ENCODE measurements at regions of chr19 and their contacts with region 1.

Region 1: DNA sequence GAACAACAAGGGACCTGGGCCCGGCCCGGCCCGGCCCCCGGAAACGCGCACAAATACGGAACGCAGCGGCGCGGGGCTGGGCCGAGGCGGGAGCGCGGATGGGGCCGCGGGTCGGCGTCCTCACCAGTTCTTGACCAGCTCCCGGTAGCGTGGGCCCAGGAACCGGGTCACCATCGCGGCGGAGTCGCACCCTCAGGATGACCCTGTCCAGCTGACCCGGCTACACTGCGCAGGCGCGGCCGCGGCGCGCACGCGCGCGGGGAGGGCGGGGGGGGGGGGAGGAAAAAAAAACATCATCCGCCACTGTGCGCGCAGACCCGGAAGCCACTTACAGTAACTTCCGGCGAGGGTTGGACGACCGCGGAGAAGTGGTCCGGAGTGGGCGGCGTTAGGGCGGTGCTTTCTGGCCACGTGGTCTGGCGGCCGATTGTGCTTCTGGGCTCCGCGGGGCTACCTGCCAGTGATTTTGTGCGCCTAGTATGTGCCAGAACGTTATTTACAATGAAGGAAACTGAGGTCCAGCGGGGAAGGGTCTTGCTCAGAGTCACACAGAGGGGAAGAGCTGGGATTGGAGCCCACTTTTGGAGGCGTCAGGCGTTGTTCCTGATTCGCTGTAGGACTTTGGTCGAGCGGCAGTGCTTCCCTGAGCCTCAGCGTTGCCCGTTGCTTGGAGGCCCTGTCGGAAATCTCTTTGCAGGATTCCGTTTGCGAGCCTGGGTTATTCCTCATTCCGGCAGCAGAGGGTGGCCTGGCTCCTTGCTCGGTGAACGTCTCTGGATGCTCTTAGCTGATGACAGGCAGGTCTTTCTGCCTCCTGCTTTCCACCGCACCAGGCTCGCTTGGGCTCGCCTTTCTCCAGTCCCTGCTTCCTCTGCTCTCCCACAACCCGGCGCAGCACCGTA is at the start of gene UQCR11:
- DNase-seq: peak; percentile 95
- H3K4me3 ChIP-seq: peak within 1 kb of the TSS; percentile 87 to 99 (median 95)
- H3K27ac ChIP-seq: peak within 1 kb of the TSS; percentile 51
- H3K4me1 ChIP-seq: peaks cover 9% of the 10 kb centered on the region
- H3K27me3 ChIP-seq: no peaks in the 10 kb centered on the region
- CTCF ChIP-seq: peak; percentile 32 to 60
- POLR2A ChIP-seq: peak; percentile 93
- total RNA-seq, gene UQCR11: 210 and 223 TPM in 2 replicates

Region 2: DNA sequence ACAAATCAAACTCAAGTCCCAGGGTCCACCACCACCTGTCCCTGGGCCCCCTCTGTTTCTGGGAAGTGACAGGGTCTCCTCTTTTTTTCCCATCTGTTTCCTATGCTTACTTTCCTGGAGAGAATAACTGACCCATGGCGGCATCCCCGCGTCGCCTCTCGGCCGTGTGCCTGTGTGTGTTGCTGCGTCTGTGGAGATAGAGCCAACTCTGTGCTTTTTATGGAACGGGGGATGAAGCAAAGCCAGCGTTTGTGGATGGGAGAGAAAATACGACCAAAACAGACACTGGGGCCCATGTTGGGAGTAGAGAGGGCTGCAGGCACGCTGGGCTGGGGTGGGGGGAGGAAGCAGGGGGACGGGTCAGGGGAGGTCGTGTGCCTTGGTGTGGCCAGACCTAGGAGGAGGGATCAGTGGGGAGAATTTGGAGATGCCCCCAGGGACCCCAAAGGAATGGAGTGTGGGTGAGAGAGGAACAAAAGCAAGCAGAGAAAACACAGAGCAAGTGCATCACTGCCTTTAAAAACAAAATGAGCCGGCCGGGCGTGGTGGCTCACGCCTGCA is 65.0 kb before region 1 on chr19:
- CTCF ChIA-PET with region 1: interaction called, 13 read pairs
- POLR2A ChIA-PET with region 1: no interaction called
- dilution Hi-C with region 1: no loop called
- intact Hi-C with region 1: no loop called
- DNase-seq: no peak
- H3K4me3 ChIP-seq: no peak overlapping the region
- H3K27ac ChIP-seq: no peak overlapping the region
- H3K4me1 ChIP-seq: no peaks in the 10 kb centered on the region
- H3K27me3 ChIP-seq: no peaks in the 10 kb centered on the region
- CTCF ChIP-seq: no peak
- POLR2A ChIP-seq: no peak

Region 3: DNA sequence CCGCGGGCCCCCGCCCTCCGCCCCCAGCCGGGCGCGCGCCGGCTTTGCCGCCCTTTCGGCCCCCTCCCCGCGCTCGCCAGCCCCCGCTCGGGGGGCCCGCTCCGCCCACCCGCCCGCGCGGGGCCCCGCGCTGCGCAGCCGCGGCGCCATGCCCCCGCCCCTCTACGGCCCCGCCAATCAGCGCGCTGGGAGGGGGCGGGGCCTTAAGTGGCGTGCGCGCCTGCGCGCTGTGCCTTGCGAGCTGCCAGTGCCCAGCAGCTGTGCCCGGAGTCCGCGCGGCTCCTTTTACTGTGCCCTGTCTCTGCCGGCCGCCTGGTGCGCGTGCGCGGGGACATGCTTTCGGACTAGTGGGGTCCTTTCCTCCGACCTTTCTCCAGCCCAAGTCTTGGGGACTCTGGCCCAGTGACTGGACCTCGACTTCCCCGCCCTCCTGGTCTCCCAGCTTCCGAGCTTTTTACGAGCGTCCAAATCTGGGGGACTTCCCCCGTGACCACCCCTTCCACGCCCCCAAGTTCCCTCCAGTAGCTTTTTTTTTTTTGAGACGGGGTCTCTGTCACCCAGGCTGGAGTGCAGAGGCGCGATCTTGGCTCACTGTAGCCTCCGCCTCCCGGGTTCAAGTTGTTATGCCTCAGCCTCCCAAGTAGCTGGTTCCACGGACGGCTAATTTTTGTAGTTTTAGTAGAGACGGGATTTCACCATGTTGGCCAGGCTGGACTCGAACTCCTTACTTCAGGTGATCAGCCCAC is 12.6 kb before region 1 on chr19 and contains the start of gene MBD3:
- CTCF ChIA-PET with region 1: interaction called, 4 read pairs
- POLR2A ChIA-PET with region 1: interaction called, 3 read pairs
- dilution Hi-C with region 1: no loop called
- intact Hi-C with region 1: loop called (anchors 1 kb)
- DNase-seq: peak; percentile 89
- H3K4me3 ChIP-seq: peak within 1 kb of the TSS; percentile 89 to 99 (median 99)
- H3K27ac ChIP-seq: peak within 1 kb of the TSS; percentile 88
- H3K4me1 ChIP-seq: peaks cover 15% of the 10 kb centered on the region
- H3K27me3 ChIP-seq: no peaks in the 10 kb centered on the region
- CTCF ChIP-seq: no peak
- POLR2A ChIP-seq: peak; percentile 75
- total RNA-seq, gene MBD3: 120 and 121 TPM in 2 replicates

Region 4: GRCh38 chr19:1652471-1653299 is 47.2 kb after region 1 on chr19 and contains the start of gene TCF3:
- CTCF ChIA-PET with region 1: interaction called, 6 read pairs
- POLR2A ChIA-PET with region 1: no interaction called
- dilution Hi-C with region 1: no loop called
- intact Hi-C with region 1: loop called (anchors 1 kb)
- DNase-seq: peak; percentile 99
- H3K4me3 ChIP-seq: peak within 1 kb of the TSS; percentile 45 to 89 (median 62)
- H3K27ac ChIP-seq: peak within 1 kb of the TSS; percentile 98
- H3K4me1 ChIP-seq: peaks cover 2% of the 10 kb centered on the region
- H3K27me3 ChIP-seq: no peaks in the 10 kb centered on the region
- CTCF ChIP-seq: no peak
- POLR2A ChIP-seq: peak; percentile 28
- total RNA-seq, gene TCF3: 193 and 197 TPM in 2 replicates

Region 5: DNA sequence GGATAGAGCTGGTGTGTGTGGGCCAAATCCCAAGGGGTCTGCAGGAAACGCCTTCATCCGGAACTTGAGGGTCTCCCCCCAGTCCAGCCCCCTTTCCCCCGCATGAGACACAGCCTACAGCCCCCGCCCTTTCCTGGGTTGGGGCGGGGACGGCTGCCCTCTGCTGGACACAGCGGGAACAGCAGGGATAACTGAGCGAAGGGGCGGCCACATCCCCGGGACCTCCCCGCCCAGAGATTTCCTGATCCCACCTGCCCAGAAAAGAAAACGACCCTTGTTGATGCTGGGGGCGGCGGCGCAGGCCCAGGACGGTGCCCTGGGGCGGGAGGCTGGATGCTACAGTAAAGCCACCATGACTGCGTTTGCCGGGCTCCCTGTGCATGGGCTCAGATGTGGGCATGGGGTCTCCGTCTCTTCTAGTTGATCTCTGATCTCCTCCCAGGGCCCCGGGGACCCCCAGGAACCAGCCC is 162.0 kb after region 1 on chr19:
- CTCF ChIA-PET with region 1: no interaction called
- POLR2A ChIA-PET with region 1: no interaction called
- dilution Hi-C with region 1: no loop called
- intact Hi-C with region 1: loop called (anchors 1 kb)
- DNase-seq: peak; percentile 24
- H3K4me3 ChIP-seq: no peak overlapping the region
- H3K27ac ChIP-seq: no peak overlapping the region
- H3K4me1 ChIP-seq: no peaks in the 10 kb centered on the region
- H3K27me3 ChIP-seq: peaks cover 43% of the 10 kb centered on the region in 2 experiments
- CTCF ChIP-seq: peak; percentile 88 to 95
- POLR2A ChIP-seq: no peak